ENCODE measurements at regions of chr1 and their contacts with region 1.

Region 1: GRCh38 chr1:16967095-16967575 is 13.3 kb downstream of the MFAP2 start:
- H3K4me3 ChIP-seq: no peak overlapping the region
- H3K27ac ChIP-seq: peak overlapping the region; percentile 66
- H3K4me1 ChIP-seq: peaks cover 8% of the 10 kb centered on the region; the same call in 1 of the 2 replicates
- CTCF ChIP-seq: no peak

Region 2: DNA sequence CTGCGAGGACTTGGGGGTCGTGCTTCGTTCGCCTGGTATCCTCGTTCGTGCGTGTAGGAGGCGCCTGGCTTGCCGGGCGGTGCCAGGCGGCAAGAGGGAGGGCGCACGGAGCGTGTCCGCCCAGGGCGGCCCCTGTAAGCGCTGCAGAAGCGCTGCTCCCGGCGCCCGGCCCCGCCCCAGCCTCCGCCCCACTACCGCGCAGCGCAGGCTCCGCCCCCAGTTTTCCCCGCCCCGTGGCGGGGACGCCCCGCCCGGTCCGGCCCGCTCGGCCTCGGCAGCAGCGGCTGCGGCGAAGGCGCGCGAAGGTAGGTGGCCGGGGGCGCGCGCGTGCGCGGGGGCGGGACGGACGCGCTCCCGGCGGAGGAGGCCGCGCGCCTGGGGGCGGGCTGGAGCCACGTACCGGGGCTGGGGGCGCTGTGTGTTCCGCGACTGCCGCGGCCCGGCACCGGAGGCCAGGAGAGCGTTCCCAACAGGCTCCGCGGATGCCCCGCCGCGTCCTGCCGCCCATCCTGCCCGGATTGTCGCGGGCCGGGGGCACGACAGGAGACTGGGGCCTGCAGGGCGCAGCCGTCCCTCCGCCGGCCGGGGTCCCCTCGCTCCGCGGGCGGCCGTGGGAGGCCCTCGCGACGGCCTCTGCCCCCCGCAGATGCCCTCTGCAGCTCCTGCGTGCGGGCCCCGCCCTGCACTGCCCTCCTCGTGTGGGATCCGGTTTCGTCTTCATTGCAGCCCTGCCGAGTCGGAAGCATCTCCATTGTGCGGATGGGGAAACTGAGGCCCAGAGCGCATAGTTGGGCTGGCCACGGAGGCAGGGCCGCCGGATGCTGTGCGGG is 53.1 kb before region 1 on chr1:
- CTCF ChIA-PET with region 1: no interaction called
- POLR2A ChIA-PET with region 1: no interaction called
- H3K4me3 ChIP-seq: peak overlapping the region; percentile 72
- H3K27ac ChIP-seq: peak overlapping the region; percentile 83; the same call in 1 of the 2 replicates
- H3K4me1 ChIP-seq: peaks cover 3% of the 10 kb centered on the region
- CTCF ChIP-seq: 0 out of 2 replicates have a peak, but pooled peaks have one; percentile 24

Region 3: GRCh38 chr1:16938351-16939321 is 28.5 kb before region 1 on chr1:
- CTCF ChIA-PET with region 1: no interaction called
- POLR2A ChIA-PET with region 1: no interaction called
- H3K4me3 ChIP-seq: no peak overlapping the region
- H3K27ac ChIP-seq: no peak overlapping the region
- H3K4me1 ChIP-seq: no peaks in the 10 kb centered on the region
- CTCF ChIP-seq: no peak

Region 4: DNA sequence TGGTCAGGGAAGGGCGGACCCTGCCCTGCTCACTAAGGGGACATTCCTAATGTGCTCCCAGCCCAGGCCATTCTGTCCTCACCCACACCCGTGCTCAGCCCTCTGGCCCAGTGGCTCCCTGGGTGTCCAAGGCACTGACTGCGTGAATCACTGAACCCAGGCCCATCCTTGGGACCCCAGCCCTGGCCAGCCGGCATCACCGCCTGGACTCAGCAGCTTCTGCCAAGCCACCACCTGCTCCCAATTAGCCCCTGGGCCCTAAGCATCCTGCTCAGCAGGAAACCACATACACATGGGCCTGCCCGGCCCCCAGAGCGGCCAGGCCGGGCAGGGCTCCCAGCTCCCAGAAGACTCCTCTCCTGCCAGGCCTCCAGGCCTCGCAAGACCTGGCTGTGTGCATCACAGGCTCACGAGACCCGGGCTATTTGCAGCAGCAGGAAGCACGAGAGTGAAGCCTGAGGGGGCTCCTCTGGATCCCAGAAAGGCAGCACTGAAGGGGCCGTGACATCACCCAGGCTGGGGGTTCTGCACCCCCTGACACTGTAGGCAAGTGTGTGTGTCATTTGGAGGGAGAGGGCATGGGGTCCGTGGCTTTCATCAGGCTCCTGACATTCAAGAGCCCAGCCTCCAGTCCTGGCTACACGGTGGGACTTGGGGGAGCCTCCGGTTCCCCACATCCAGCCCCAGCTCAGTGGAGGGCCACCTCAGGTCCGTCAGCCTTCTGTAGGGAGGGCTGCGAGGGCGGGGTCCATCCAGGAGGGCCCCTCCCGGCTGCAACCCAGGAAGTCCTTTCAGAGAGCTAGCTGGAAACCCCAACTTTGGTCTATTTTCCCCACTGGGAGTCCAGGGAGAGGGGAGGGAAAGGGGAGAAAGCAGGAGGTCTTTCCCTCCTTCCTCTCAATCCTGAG is 11.7 kb after region 1 on chr1:
- CTCF ChIA-PET with region 1: interaction called, 3 read pairs
- POLR2A ChIA-PET with region 1: interaction called, 23 read pairs
- H3K4me3 ChIP-seq: peak overlapping the region; percentile 67; the same call in 1 of the 2 replicates
- H3K27ac ChIP-seq: no peak overlapping the region; the same call in 1 of the 2 replicates
- H3K4me1 ChIP-seq: no peaks in the 10 kb centered on the region
- CTCF ChIP-seq: no peak

Region 5: DNA sequence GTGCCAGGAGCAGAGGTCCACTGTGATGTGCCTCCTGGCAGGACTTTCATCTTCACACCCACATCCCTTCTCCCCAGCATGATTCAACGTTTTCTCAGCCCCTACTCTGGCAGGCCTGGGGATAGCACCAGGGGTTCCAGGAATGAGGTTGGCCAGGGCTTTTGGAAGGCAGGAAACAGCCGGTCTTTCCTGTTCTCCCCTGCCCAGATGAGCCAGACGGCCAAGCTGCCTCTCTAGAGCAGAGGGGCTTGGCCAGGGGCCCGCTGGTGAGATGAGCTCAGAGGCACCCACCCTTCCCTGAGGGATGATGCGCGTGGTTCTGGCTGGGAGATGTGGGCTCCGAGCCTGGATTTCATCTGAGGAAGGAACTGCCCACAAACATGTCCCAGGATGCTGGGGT is 17.6 kb after region 1 on chr1:
- CTCF ChIA-PET with region 1: interaction called, 15 read pairs
- POLR2A ChIA-PET with region 1: interaction called, 23 read pairs
- H3K4me3 ChIP-seq: no peak overlapping the region
- H3K27ac ChIP-seq: no peak overlapping the region
- H3K4me1 ChIP-seq: no peaks in the 10 kb centered on the region
- CTCF ChIP-seq: no peak

Region 6: DNA sequence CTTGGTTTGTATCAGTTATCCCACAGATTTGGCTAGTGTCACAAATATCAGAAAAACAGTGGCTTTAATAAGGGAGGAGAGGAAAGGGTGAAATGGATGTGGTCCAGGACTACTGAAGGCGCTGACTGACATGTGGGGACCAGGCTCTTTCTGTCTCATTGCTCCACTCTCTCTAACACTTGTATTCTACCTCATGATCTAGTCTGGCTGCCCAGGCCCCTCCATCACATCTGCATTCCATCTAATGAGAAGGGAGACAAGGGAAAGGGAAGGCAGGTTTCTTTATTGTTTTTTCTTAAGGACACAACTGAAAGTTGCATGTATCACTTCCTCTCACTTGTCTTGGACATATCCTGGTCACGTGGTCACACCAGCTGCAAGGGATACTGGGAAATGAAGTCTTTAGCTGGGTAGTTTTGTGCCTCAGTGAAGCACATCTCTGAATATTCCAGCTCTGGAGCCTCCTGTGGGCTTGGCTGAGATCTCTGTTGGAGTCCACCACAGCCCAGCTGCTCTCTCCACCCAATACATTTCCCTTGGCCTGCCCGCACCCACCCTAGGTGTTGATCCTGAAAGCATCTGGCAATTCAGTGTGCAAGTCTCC is 194.1 kb after region 1 on chr1:
- CTCF ChIA-PET with region 1: no interaction called
- POLR2A ChIA-PET with region 1: no interaction called
- H3K4me3 ChIP-seq: no peak overlapping the region
- H3K27ac ChIP-seq: no peak overlapping the region
- H3K4me1 ChIP-seq: no peaks in the 10 kb centered on the region
- CTCF ChIP-seq: no peak